ENCODE measurements at regions of chr5 and their contacts with region 1.

Region 1: GRCh38 chr5:113606298-113607134 is 93.0 kb downstream of the YTHDC2 start:
- DNase-seq: peak; percentile 41 to 56 (median 55)
- H3K4me3 ChIP-seq: no peak overlapping the region
- H3K4me3 Mint-ChIP-seq: no peak overlapping the region
- H3K27ac ChIP-seq: no peak overlapping the region
- H3K27ac Mint-ChIP-seq: no peak overlapping the region
- H3K4me1 ChIP-seq: no peaks in the 10 kb centered on the region
- H3K4me1 Mint-ChIP-seq: peaks cover 0 to 3% (median 1%) of the 10 kb centered on the region in 4 donors
- H3K27me3 ChIP-seq: no peaks in the 10 kb centered on the region
- H3K27me3 Mint-ChIP-seq: peaks cover 15 to 18% of the 10 kb centered on the region in 2 donors

Region 2: DNA sequence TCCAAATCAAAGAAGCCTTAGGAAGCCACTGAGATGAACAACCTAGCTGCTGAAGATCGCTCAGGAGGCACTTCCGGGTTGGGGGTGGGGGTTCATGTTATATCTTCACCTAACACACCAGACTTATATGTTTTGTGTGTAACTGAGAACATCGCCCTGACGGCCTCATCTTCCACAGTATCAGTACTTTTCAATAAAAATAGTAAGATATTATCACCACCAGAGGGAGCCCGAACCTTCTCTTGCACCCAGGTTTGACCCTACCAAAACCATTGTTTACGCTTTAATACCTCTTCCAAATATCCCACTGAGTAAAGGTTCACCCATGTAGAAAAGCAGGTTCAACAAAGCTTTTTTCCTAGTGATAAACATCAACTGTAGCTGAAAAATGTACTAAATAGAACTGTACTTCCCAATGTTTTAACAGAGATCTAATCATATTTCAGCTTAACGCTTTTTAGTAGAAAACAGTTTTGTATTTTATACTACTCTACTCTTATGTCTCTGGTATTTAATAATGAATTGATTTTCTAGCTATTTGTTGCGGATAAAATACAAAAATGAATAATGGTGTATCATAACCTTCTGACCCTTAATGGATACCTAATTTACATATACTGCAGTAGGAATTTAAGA is 1431.4 kb before region 1 on chr5:
- CTCF ChIA-PET with region 1: interaction called, 4 read pairs
- POLR2A ChIA-PET with region 1: no interaction called
- intact Hi-C with region 1: loop called (anchors 2 kb)
- DNase-seq: peak in 4 of 5 donors; percentile 27 to 41 (median 40)
- H3K4me3 ChIP-seq: no peak overlapping the region
- H3K4me3 Mint-ChIP-seq: peak overlapping the region in 2 of 8 donors; percentile 6 to 48
- H3K27ac ChIP-seq: no peak overlapping the region
- H3K27ac Mint-ChIP-seq: no peak overlapping the region
- H3K4me1 ChIP-seq: peaks cover 4% of the 10 kb centered on the region
- H3K4me1 Mint-ChIP-seq: peaks cover 0 to 5% (median 2%) of the 10 kb centered on the region in 4 donors
- H3K27me3 ChIP-seq: no peaks in the 10 kb centered on the region
- H3K27me3 Mint-ChIP-seq: peaks cover 8 to 12% of the 10 kb centered on the region in 2 donors

Region 3: DNA sequence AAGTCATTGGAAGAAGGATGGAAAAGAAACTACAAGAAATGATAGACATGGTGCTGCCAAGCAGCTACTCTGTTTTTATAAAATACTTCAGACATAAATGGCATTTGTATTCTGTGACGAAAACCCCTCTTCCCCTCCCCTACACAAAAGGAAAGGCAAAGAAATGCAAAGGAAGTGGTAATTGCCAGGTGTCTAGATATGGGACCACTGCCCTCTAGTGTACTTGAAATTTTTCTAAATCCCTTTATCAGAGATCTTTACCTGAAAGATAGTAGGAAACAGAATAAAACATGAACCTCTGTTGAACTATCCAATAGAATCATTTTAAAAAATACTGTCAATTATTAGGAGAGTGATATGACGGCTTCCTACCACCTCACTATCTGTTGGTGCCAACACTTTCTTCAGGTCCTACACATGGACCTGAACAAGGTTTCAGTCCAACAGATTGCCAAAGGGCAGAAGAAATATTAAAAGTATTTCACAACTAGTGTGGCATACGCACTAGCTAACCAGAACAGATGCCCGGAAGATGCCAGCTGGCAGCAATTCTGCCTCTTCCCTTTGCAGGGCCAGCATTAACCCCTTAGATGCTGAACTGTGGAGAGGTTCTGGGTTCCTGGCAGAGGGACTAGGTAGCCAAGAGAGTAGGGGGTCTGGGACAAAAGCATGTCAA is 275.8 kb before region 1 on chr5:
- CTCF ChIA-PET with region 1: interaction called, 43 read pairs
- POLR2A ChIA-PET with region 1: no interaction called
- intact Hi-C with region 1: loop called (anchors 1 kb)
- DNase-seq: peak; percentile 41 to 69 (median 65)
- H3K4me3 ChIP-seq: no peak overlapping the region
- H3K4me3 Mint-ChIP-seq: peak overlapping the region in 6 of 8 donors; percentile 0 to 49 (median 30)
- H3K27ac ChIP-seq: no peak overlapping the region
- H3K27ac Mint-ChIP-seq: peak overlapping the region in 3 of 7 donors; percentile 43 to 81 (median 77)
- H3K4me1 ChIP-seq: peaks cover 11% of the 10 kb centered on the region
- H3K4me1 Mint-ChIP-seq: peaks cover 10 to 20% (median 12%) of the 10 kb centered on the region in 4 donors
- H3K27me3 ChIP-seq: no peaks in the 10 kb centered on the region
- H3K27me3 Mint-ChIP-seq: no peaks in the 10 kb centered on the region

Region 4: GRCh38 chr5:113336975-113337374 is 269.5 kb before region 1 on chr5:
- CTCF ChIA-PET with region 1: interaction called, 43 read pairs
- POLR2A ChIA-PET with region 1: no interaction called
- intact Hi-C with region 1: loop called (anchors 1 kb)
- DNase-seq: no peak
- H3K4me3 ChIP-seq: no peak overlapping the region
- H3K4me3 Mint-ChIP-seq: no peak overlapping the region
- H3K27ac ChIP-seq: no peak overlapping the region
- H3K27ac Mint-ChIP-seq: no peak overlapping the region
- H3K4me1 ChIP-seq: peaks cover 6% of the 10 kb centered on the region
- H3K4me1 Mint-ChIP-seq: peaks cover 3 to 15% (median 8%) of the 10 kb centered on the region in 4 donors
- H3K27me3 ChIP-seq: no peaks in the 10 kb centered on the region
- H3K27me3 Mint-ChIP-seq: peaks cover 0 to 3% of the 10 kb centered on the region in 2 donors

Region 5: DNA sequence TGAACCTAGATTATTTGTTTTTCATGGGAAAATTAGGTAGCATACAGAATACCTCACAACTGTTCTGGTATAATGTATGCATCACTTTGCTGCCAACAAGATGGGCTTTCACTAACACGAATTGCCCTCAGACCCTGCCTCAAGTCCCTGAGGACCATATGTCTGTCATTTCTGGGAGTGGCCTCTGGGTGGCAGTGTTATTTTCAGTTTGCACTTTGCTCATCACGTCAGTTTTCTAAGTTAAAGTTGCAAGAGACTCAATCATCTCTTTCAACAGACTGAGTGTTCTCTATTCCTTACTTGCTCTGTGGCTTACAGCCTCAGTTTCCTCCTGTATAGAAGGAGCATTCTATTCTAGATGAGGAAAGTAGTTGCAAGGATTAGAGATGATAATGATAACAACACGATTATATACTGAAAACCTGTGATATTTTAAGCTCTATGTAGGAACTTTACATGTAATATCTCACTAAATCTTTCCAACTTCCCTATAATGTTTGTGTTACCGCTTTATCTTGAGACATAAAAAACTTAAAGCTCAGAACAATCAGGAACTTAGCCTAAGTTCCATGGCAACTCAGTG is 227.5 kb before region 1 on chr5:
- CTCF ChIA-PET with region 1: interaction called, 17 read pairs
- POLR2A ChIA-PET with region 1: no interaction called
- intact Hi-C with region 1: loop called (anchors 1 kb)
- DNase-seq: peak; percentile 43 to 54 (median 48)
- H3K4me3 ChIP-seq: no peak overlapping the region
- H3K4me3 Mint-ChIP-seq: peak overlapping the region; percentile 31 to 84 (median 69)
- H3K27ac ChIP-seq: no peak overlapping the region
- H3K27ac Mint-ChIP-seq: peak overlapping the region in 3 of 7 donors; percentile 5 to 73 (median 19)
- H3K4me1 ChIP-seq: peaks cover 30% of the 10 kb centered on the region
- H3K4me1 Mint-ChIP-seq: peaks cover 33 to 58% (median 48%) of the 10 kb centered on the region in 4 donors
- H3K27me3 ChIP-seq: no peaks in the 10 kb centered on the region
- H3K27me3 Mint-ChIP-seq: peaks cover 4 to 7% of the 10 kb centered on the region in 2 donors

Region 6: GRCh38 chr5:114123654-114124053 is 517.1 kb after region 1 on chr5:
- CTCF ChIA-PET with region 1: no interaction called
- POLR2A ChIA-PET with region 1: no interaction called
- intact Hi-C with region 1: no loop called
- DNase-seq: no peak
- H3K4me3 ChIP-seq: no peak overlapping the region
- H3K4me3 Mint-ChIP-seq: no peak overlapping the region
- H3K27ac ChIP-seq: no peak overlapping the region
- H3K27ac Mint-ChIP-seq: peak overlapping the region in 1 of 7 donors; percentile 32
- H3K4me1 ChIP-seq: no peaks in the 10 kb centered on the region
- H3K4me1 Mint-ChIP-seq: no peaks in the 10 kb centered on the region
- H3K27me3 ChIP-seq: no peaks in the 10 kb centered on the region
- H3K27me3 Mint-ChIP-seq: no peaks in the 10 kb centered on the region

Region 7: DNA sequence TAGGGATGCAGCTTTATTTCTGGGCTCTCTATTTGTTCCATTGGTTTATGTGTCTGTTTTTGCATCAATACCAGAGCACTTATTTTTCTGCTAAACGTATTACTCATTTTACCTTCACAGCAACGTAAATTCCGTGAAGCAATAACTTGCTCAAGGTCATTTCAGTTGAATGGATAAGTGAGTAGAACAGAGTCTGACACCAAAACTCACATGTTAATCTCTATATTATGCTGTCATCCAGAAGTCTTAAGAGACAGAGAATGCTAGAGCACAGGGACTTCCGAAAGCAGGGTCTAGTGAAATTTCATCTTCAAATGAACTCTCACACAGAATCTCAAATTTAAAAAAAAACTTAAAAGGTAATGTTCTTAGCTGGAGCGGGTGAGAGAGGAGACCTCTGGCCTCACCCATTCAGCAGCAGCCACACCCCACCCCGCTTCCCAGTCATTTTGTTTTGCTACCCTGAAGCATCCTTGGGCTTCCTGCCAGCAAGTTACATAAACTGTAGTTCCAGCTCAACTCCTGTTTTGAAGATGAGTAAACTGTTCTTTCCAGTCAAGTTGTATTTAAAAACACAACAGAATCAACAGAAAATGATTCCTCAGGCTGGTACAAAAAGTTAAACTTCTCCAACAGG is 1493.9 kb after region 1 on chr5:
- CTCF ChIA-PET with region 1: no interaction called
- POLR2A ChIA-PET with region 1: no interaction called
- intact Hi-C with region 1: no loop called
- DNase-seq: no peak
- H3K4me3 ChIP-seq: no peak overlapping the region
- H3K4me3 Mint-ChIP-seq: no peak overlapping the region
- H3K27ac ChIP-seq: no peak overlapping the region
- H3K27ac Mint-ChIP-seq: no peak overlapping the region
- H3K4me1 ChIP-seq: no peaks in the 10 kb centered on the region
- H3K4me1 Mint-ChIP-seq: no peaks in the 10 kb centered on the region
- H3K27me3 ChIP-seq: no peaks in the 10 kb centered on the region
- H3K27me3 Mint-ChIP-seq: peaks cover 11 to 12% of the 10 kb centered on the region in 2 donors

Measured in CD4-positive, alpha-beta memory T cell (primary cell).